Heart left ventricle (tissue), 16 donors: ENCODE measurements at regions of chr5 and their contacts with region 1.

Region 1: GRCh38 chr5:157263496-157264090 is 2.3 kb upstream of the CYFIP2 start:
- DNase-seq: no peak
- ATAC-seq: no peak
- H3K4me3 ChIP-seq: no peak overlapping the region
- H3K27ac ChIP-seq: no peak overlapping the region
- H3K4me1 ChIP-seq: peaks cover 0 to 29% (median 12%) of the 10 kb centered on the region in 12 donors
- H3K27me3 ChIP-seq: peaks cover 0 to 5% (median 0%) of the 10 kb centered on the region in 9 donors
- CTCF ChIP-seq: no peak
- POLR2A ChIP-seq: no peak

Region 2: DNA sequence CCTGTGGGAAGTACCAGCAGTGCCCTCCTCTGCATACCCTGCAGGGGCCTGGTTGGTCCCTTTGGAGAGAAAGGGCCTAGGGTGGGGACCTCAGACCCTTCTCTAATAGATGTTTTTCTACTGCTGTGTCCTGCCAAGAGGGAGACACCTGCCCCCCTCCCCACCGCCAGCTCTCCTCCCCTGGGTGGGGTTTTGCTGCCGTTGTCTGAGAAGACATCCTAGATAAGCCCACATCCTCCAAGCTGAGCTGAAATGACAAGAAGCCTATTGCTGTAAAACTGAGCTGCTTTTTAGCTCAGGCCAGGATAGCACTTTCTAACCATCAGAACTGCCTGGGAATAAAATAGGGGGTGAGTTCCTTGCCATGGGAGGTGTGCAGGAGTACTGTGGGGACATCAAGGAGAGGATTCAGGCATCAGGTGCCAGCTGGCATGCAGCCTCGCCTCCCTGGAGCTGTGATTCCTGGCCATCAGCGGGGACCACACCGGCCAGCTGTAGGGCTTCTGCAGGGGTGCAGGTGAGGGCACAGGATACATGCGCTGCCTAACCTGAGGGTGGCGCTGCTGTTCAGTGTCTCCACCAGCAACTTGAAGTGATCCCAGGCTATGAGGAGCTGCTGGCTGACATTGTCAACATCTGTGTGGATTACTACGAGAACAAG is 40.2 kb after region 1 on chr5:
- intact Hi-C with region 1: loop called in 1 of 10 experiments (anchors 5 kb)
- DNase-seq: peak in 4 of 5 donors; percentile 36 to 74 (median 54)
- ATAC-seq: peak; percentile 60 to 78 (median 77)
- H3K4me3 ChIP-seq: no peak overlapping the region
- H3K27ac ChIP-seq: peak overlapping the region in 2 of 12 donors; percentile 27 to 37
- H3K4me1 ChIP-seq: peaks cover 0 to 12% (median 0%) of the 10 kb centered on the region in 12 donors
- H3K27me3 ChIP-seq: no peaks in the 10 kb centered on the region
- CTCF ChIP-seq: peak in 8 of 12 donors; percentile 12 to 43 (median 36)
- POLR2A ChIP-seq: no peak

Region 3: DNA sequence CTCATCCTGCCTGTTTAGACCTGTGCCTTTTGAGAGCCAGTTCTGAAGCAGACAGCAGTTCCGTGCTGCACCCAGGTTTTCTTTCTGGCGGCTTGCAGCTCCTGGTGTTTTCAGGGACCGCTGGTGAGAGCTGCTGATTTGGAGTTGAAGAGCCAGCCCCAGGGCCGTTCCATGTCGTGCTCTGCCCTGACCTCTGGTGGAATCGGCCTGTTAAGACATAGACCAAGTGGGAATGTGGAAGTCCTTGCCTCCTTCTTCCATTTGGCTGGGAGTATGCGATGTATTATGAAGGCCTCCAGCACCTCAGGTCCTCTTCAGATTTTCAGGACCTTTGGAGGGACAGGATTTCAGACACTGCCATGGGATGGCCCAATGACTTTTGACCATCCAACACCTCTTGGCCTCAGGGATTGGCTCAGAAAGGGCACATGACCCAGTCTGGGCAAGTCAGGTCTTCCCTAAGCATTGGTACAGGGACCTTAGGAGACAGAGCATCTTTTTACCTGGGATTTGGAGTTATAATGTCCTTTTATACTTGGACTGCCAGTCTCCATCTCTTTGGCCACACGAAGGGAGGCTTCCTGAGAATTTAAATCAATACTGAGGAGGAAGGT is 731.4 kb after region 1 on chr5:
- intact Hi-C with region 1: no loop called
- DNase-seq: peak; percentile 60 to 73 (median 69)
- ATAC-seq: peak; percentile 91 to 96 (median 95)
- H3K4me3 ChIP-seq: no peak overlapping the region
- H3K27ac ChIP-seq: no peak overlapping the region
- H3K4me1 ChIP-seq: no peaks in the 10 kb centered on the region
- H3K27me3 ChIP-seq: peaks cover 0 to 4% (median 0%) of the 10 kb centered on the region in 9 donors
- CTCF ChIP-seq: peak; percentile 56 to 81 (median 76)
- POLR2A ChIP-seq: no peak